ENCODE measurements at regions of chr2 and their contacts with region 1.

Region 1: DNA sequence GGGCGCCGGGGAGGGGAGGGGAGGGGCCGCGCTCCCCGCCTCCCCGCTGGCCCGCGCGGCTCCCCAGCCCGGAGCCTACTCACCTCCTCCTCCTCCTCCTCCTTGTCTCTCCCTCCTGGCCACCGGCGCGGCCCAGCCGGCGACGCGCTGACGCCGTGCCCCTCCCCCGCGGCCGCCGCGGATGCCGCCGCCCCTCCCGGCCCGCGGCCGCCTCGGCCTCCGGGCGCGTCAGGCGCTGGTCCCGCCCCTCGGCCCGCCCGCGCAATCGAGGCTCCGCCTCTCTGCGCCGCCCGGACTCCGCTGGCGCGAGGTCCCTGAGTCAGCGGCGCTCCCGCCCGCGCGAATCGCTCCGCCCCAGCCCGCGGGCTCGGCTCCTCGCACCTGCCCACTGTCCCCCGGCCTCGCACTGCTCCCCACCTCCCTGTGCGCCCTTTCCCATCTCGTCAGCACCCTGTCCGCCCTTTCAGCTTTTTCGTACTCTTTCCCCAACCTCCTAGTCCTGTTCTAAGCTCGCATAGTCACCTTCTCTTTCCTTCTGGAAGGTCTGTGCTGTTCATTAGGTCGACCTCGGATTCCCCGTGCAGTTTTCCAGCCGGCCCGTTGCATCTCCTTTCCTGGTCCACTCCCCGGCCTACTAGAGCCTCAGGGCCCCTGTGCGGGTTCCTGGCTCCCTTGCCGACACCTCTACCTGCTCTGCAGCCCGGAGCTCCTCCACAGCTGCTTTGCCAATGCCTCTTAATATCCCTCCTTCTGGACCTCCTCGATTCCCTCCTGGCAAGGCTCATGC is 187.4 kb downstream of the ZEB2 start:
- DNase-seq: peak; percentile 87 to 93 (median 91)
- H3K4me3 ChIP-seq: peak overlapping the region; percentile 61
- H3K27ac ChIP-seq: peak overlapping the region; percentile 78 to 82
- H3K4me1 ChIP-seq: peaks cover 2% of the 10 kb centered on the region
- H3K27me3 ChIP-seq: no peaks in the 10 kb centered on the region
- CTCF ChIP-seq: no peak
- EP300 ChIP-seq: no peak
- POLR2A ChIP-seq: peak; percentile 51

Region 2: DNA sequence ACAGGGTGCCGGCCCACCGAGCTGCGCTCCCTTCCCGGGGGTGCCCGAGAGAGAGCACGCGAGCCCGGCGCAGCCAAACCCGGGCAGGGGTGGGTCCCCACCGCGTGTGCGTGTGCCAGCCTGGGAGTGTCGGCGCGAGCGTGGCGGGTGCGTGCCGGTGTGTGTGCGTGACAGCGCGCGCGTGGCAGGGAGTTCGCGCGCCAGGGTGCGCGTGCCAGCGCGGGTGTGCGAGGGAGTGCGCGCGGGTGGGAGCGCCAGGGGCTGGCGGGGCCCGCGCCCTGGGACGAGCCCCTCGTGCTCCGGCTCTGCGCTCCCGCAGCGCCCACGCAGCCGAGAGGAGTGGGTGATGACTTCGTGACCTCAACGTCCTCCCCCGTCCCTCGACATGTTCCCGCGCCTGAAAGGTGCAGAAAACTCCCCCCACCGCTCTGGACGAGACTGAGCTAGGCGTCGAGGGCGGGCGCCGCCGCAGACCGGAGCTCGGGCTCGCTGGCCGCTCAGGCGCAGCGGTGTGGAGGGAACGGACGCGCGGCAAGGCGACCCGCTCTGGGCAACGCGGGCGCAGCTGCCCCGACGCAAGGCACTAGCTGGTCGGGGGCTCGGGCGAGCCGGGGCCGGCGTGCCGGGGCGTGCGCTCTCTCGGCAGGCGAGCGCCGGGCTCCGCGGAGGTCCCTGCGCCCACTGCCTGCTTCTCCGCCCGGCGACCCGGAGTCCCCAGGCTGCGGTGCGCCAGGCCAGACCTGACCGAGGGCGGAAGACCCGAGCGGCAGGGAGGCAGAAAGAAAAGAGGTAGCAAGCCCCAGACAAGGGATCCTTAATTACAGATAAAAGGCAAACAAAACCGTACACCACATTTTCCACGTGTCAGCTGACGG is 395.5 kb before region 1 on chr2:
- intact Hi-C with region 1: loop called in 1 of 4 experiments (anchors 5 kb)
- DNase-seq: peak; percentile 62 to 83 (median 75)
- H3K4me3 ChIP-seq: peak overlapping the region; percentile 49
- H3K27ac ChIP-seq: peak overlapping the region; percentile 97 to 98
- H3K4me1 ChIP-seq: peaks cover 8% of the 10 kb centered on the region
- H3K27me3 ChIP-seq: no peaks in the 10 kb centered on the region
- CTCF ChIP-seq: no peak
- EP300 ChIP-seq: no peak
- POLR2A ChIP-seq: peak; percentile 47

Region 3: DNA sequence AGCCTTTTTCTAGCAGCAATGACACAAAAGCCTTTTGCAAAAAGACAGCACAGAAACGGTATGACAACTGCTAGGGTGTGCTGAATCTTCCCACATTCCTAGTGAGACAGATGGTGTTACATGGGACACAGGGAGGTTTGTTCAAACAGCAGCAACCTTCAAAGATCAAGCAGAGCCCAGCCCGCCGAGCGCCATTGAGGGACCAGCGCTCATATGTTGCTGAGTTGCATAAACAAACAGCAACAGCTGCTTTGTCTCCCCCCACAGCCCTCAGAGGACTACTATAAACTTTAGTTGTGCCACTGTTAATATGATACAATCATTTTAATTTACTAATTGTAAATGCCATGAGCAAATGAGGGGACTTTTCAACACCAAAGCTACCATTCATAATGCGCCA is 69.7 kb after region 1 on chr2:
- intact Hi-C with region 1: no loop called
- DNase-seq: peak in 2 of 5 donors; percentile 29 to 44
- H3K4me3 ChIP-seq: no peak overlapping the region
- H3K27ac ChIP-seq: peak overlapping the region in 1 of 2 donors; percentile 9
- H3K4me1 ChIP-seq: peaks cover 4% of the 10 kb centered on the region
- H3K27me3 ChIP-seq: no peaks in the 10 kb centered on the region
- CTCF ChIP-seq: no peak
- EP300 ChIP-seq: no peak
- POLR2A ChIP-seq: no peak

Region 4: GRCh38 chr2:144414324-144414845 is 81.8 kb after region 1 on chr2:
- intact Hi-C with region 1: no loop called
- DNase-seq: peak in 1 of 5 donors; percentile 54
- H3K4me3 ChIP-seq: no peak overlapping the region
- H3K27ac ChIP-seq: no peak overlapping the region
- H3K4me1 ChIP-seq: peaks cover 5% of the 10 kb centered on the region
- H3K27me3 ChIP-seq: no peaks in the 10 kb centered on the region
- CTCF ChIP-seq: no peak
- EP300 ChIP-seq: peak; percentile 46
- POLR2A ChIP-seq: no peak

Measured in ovary (tissue), 10 donors.